Gastrocnemius medialis (tissue), 4 donors: ENCODE measurements at regions of chr9 and their contacts with region 1.

Region 1: DNA sequence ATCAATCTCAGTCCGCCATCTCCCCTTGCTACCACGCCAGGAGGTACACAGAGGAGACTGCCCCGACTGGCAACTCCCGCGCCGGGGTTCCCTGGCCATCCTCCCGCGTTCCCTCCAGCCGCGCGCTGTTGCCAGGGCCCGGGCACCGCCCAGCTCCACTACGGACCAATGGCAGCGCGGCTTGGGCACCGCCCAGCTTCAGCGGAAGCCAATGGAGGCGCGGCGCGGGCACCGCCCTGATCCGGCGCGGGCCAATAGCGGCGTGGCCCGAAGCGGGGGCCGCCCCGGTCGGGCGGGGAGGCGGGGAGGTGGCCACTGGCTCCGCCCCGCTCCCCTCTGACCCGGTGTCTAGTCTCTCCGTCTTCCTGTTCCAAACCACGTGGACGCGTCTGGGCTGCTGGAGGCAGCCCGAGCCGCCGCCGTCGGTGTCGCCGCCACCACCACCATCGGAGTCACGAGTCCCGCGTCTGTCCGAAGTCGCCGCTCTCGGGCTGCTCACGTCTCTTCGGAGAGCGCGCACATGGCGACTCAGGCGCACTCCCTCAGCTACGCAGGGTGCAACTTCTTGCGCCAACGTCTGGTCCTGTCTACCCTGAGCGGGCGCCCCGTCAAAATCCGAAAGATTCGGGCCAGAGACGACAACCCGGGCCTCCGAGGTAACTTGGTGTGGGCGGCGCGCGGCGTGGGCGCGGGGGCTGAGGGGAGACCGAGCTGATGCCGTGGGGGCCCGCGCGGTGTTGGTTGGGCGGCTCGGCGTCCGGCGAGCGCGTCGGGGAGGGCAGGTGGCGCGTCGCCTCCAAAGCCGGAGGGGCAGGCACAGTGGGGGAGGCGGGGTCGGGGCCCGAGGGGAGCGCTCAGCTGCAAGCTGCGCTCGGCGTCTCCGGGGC is at the start of gene RCL1:
- DNase-seq: peak; percentile 93 to 96
- ATAC-seq: peak; percentile 87 to 88
- H3K4me3 ChIP-seq: peak within 1 kb of the TSS; percentile 87 to 99 (median 97)
- H3K27ac ChIP-seq: peak within 1 kb of the TSS; percentile 94 to 100 (median 98)
- H3K4me1 ChIP-seq: peaks cover 31 to 39% of the 10 kb centered on the region in 2 donors
- H3K27me3 ChIP-seq: no peaks in the 10 kb centered on the region
- CTCF ChIP-seq: no peak
- POLR2A ChIP-seq: peak; percentile 96
- total RNA-seq, gene RCL1: 18.8 to 62.4 (median 26.2) TPM

Region 2: DNA sequence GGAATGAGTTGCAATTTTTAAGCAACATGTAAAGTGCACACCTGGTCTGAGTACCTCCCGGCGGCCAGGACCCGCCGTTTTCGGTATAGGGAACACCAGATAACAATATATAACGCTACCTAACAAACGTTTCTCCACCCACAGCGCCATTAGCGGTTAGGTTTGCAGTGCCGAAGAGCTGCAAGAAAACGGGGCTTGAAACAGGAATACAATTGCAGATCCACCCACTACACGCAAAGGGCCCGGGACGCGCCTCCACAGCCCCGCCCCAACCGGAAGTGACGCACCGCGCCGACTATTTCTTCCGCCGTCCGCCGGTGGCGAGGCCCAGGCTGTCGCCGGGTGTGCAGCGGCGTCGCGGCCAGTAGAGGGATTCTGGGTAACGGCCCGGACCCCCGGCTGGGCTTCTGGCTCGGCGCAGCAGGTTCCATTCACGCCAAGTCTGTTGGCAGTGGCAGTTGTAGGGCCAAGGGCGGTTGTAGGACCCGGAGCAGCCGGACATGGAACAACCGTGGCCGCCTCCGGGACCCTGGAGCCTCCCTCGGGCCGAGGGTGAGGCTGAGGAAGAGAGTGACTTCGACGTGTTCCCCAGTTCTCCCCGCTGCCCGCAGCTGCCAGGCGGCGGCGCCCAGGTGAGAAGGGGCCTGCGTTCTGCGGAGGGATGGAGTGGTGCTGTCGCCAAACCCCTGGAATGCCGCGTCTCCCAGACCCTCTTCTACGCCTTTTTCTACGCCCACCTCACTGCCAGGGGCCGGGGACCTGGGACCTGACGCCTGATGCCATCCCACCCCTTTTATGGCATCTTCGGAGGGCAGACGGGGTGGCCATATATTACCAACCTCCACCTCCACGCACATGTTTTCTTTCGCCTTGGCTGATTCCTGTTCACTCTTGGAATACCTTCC is 113.3 kb before region 1 on chr9 and contains the start of gene CDC37L1:
- in situ Hi-C with region 1: no loop called
- intact Hi-C with region 1: loop called (anchors 2 kb)
- DNase-seq: peak; percentile 95 to 96
- ATAC-seq: peak; percentile 76 to 84
- H3K4me3 ChIP-seq: peak within 1 kb of the TSS; percentile 81 to 98 (median 88)
- H3K27ac ChIP-seq: peak within 1 kb of the TSS; percentile 91 to 99 (median 95)
- H3K4me1 ChIP-seq: peaks cover 40 to 44% of the 10 kb centered on the region in 2 donors
- H3K27me3 ChIP-seq: no peaks in the 10 kb centered on the region
- CTCF ChIP-seq: peak; percentile 72 to 88 (median 81)
- POLR2A ChIP-seq: peak; percentile 98 to 99
- total RNA-seq, gene CDC37L1: 91.1 to 157 (median 131) TPM

Region 3: GRCh38 chr9:4750023-4750673 is 42.7 kb before region 1 on chr9:
- in situ Hi-C with region 1: loop called in 1 of 4 experiments (anchors 5 kb)
- intact Hi-C with region 1: no loop called
- DNase-seq: no peak
- ATAC-seq: peak; percentile 56 to 65
- H3K4me3 ChIP-seq: no peak overlapping the region
- H3K27ac ChIP-seq: no peak overlapping the region
- H3K4me1 ChIP-seq: no peaks in the 10 kb centered on the region
- H3K27me3 ChIP-seq: no peaks in the 10 kb centered on the region
- CTCF ChIP-seq: peak in 4 of 5 experiments; percentile 42 to 65 (median 44)
- POLR2A ChIP-seq: no peak

Region 4: GRCh38 chr9:4886698-4887097 is 93.9 kb after region 1 on chr9:
- in situ Hi-C with region 1: no loop called
- intact Hi-C with region 1: no loop called
- DNase-seq: no peak
- ATAC-seq: no peak
- H3K4me3 ChIP-seq: no peak overlapping the region
- H3K27ac ChIP-seq: no peak overlapping the region
- H3K4me1 ChIP-seq: peaks cover 8 to 10% of the 10 kb centered on the region in 2 donors
- H3K27me3 ChIP-seq: no peaks in the 10 kb centered on the region
- CTCF ChIP-seq: no peak
- POLR2A ChIP-seq: no peak

Region 5: GRCh38 chr9:4984621-4985385 is 192.0 kb after region 1 on chr9 and contains the start of gene JAK2:
- in situ Hi-C with region 1: no loop called
- intact Hi-C with region 1: loop called (anchors 1 kb)
- DNase-seq: peak; percentile 84 to 86
- ATAC-seq: peak; percentile 84 to 85
- H3K4me3 ChIP-seq: peak within 1 kb of the TSS; percentile 73 to 86 (median 79)
- H3K27ac ChIP-seq: peak within 1 kb of the TSS; percentile 93 to 98 (median 95)
- H3K4me1 ChIP-seq: peaks cover 35 to 51% of the 10 kb centered on the region in 2 donors
- H3K27me3 ChIP-seq: no peaks in the 10 kb centered on the region
- CTCF ChIP-seq: peak in 4 of 5 experiments; percentile 10 to 44 (median 38)
- POLR2A ChIP-seq: peak; percentile 76 to 85
- total RNA-seq, gene JAK2: 4.6 to 16.5 (median 9.0) TPM

Region 6: DNA sequence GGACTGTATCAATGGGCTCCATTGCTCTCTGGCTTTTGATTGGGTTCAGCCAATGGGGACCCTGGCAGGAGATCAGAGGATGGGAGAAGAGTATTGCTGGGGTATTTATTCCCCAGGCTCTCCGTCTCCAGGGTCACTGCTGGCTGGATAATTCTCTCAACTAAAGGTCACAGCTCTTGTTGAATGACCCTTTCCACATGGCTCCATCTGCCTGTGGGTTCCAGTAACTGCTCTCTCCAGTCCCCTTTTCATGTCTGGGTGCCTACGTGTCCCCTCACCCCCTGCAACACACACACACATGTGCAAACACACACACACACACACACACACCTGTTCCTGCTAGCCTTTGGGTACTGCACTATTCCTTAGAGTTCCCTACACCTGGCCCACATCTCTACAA is 782.2 kb after region 1 on chr9:
- in situ Hi-C with region 1: no loop called
- intact Hi-C with region 1: no loop called
- DNase-seq: no peak
- ATAC-seq: no peak
- H3K4me3 ChIP-seq: no peak overlapping the region
- H3K27ac ChIP-seq: no peak overlapping the region
- H3K4me1 ChIP-seq: peaks cover 11 to 29% of the 10 kb centered on the region in 2 donors
- H3K27me3 ChIP-seq: no peaks in the 10 kb centered on the region
- CTCF ChIP-seq: no peak
- POLR2A ChIP-seq: no peak

Region 7: DNA sequence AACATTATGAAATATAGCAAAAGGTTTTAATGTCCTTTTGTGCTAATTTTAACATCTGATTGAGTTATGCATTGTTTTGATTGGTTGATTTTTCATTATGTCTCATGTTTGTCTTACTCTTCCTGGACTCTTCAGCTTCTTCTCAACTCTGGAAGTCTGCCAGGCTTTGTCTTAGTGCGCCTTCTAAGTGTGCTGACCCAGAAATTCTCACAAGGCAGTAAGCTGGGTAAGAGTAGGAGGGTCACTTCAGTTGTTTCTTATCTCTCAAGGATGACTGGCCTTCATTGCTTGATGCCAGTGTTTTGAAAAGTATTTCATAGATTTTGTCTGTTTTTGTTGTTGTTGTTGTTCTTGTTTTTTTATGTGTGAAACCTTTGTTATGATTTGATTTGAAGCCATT is 895.3 kb after region 1 on chr9:
- in situ Hi-C with region 1: no loop called
- intact Hi-C with region 1: no loop called
- DNase-seq: no peak
- ATAC-seq: no peak
- H3K4me3 ChIP-seq: no peak overlapping the region
- H3K27ac ChIP-seq: no peak overlapping the region
- H3K4me1 ChIP-seq: peaks cover 4 to 18% of the 10 kb centered on the region in 2 donors
- H3K27me3 ChIP-seq: no peaks in the 10 kb centered on the region
- CTCF ChIP-seq: no peak
- POLR2A ChIP-seq: no peak